ENCODE measurements at regions of chr9 and their contacts with region 1.

Region 1: GRCh38 chr9:108761655-108762347 is 94.0 kb downstream of the ACTL7B start:
- DNase-seq: peak; percentile 71
- H3K4me3 Mint-ChIP-seq: no peak overlapping the region
- H3K27ac Mint-ChIP-seq: peak overlapping the region; percentile 31
- H3K4me1 Mint-ChIP-seq: peaks cover 18% of the 10 kb centered on the region
- H3K27me3 Mint-ChIP-seq: no peaks in the 10 kb centered on the region
- CTCF ChIP-seq: peak; percentile 89

Region 2: GRCh38 chr9:107465467-107466451 is 1296.0 kb before region 1 on chr9:
- CTCF ChIA-PET with region 1: interaction called, 8 read pairs
- POLR2A ChIA-PET with region 1: no interaction called
- intact Hi-C with region 1: loop called (anchors 2 kb)
- DNase-seq: peak; percentile 61
- H3K4me3 Mint-ChIP-seq: peak overlapping the region; percentile 69
- H3K27ac Mint-ChIP-seq: no peak overlapping the region
- H3K4me1 Mint-ChIP-seq: no peaks in the 10 kb centered on the region
- H3K27me3 Mint-ChIP-seq: no peaks in the 10 kb centered on the region
- CTCF ChIP-seq: peak; percentile 95

Region 3: DNA sequence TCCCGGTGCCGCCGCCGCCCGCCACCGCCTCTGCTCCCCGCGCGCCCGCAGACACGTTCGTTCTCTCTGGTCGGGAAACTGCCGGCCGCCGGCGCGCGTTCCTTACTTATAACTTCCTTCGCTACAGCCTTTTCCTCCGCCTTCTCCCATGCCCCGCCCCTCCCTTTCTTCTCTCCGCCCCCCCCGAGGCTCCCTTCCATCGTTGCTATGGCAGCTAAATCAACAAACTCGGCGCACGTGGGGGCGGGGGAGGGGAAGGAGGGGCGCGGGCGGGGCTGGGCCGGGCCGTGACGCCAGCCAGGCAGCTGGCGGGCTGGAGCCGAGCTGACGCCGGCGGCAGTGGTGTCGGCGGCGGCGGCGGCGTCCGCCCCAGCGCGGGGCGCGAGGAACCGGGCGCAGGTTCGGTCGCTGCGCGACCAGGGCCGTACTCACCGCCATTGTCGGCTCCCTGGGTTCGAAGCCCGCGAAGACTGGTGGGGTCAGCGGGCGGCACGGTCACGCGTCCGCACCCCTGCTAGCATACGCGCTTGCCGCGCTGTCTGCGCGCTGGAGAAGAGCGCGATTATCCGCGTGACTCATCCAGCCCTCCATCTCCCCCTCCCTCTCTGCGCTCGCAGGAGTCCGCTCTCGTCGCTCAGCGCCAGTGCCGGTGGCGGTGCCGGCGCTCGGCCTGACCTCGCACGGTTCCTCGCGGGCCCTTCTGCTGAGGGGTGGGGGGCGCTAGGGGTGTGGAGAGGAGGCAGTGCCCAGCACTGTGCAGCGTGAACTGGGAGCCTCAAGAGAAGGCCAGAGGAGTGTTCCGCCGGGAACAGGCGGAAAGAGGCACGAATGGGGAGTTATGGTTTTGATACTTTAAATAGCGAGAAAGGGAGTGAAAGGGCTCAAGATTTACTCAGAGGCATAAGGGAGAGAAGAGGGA is 1271.9 kb before region 1 on chr9 and contains the start of gene KLF4:
- CTCF ChIA-PET with region 1: interaction called, 3 read pairs
- POLR2A ChIA-PET with region 1: interaction called, 4 read pairs
- intact Hi-C with region 1: loop called (anchors 5 kb)
- DNase-seq: peak; percentile 95
- H3K4me3 Mint-ChIP-seq: peak within 1 kb of the TSS; percentile 94
- H3K27ac Mint-ChIP-seq: peak within 1 kb of the TSS; percentile 96
- H3K4me1 Mint-ChIP-seq: peaks cover 18% of the 10 kb centered on the region
- H3K27me3 Mint-ChIP-seq: no peaks in the 10 kb centered on the region
- CTCF ChIP-seq: no peak
- total RNA-seq, gene KLF4: 94.9 and 96.0 TPM in 2 replicates

Region 4: DNA sequence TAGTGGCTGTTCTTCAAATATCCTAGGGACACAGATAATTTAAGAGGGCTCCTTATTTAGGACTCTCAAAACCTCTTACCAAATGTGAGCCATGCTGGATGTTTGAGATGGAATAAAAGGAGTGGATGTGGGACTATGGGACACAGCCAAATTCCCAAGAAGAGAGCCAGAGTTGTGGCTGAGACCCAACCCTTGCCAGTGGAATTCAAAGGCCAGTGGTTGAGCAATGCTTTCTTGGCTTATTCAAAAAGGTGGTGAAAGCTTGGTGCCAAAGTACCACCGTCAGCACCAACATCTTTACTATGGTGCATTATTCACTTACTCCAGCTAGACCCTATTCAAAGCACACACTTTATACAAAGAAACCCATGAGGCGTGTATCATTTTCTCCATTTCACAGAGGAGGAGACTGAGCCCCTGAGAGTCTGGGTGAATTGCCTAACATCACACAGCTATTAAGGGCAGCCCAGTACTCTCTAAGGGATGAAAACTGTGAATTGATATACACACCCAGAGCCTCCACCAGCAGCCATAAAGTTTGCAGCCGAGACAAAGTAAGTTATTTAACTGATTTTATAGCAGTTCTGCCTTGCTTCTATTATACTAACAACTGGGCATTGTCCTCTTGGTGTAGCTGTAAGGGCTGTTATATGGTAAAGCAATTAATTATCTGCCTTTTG is 297.7 kb before region 1 on chr9:
- CTCF ChIA-PET with region 1: no interaction called
- POLR2A ChIA-PET with region 1: no interaction called
- intact Hi-C with region 1: no loop called
- DNase-seq: peak; percentile 76
- H3K4me3 Mint-ChIP-seq: no peak overlapping the region
- H3K27ac Mint-ChIP-seq: peak overlapping the region; percentile 46
- H3K4me1 Mint-ChIP-seq: peaks cover 15% of the 10 kb centered on the region
- H3K27me3 Mint-ChIP-seq: no peaks in the 10 kb centered on the region
- CTCF ChIP-seq: no peak

Region 5: GRCh38 chr9:108478431-108478837 is 283.4 kb before region 1 on chr9:
- CTCF ChIA-PET with region 1: interaction called, 3 read pairs
- POLR2A ChIA-PET with region 1: no interaction called
- intact Hi-C with region 1: loop called (anchors 10 kb)
- DNase-seq: peak; percentile 97
- H3K4me3 Mint-ChIP-seq: peak overlapping the region; percentile 37
- H3K27ac Mint-ChIP-seq: peak overlapping the region; percentile 89
- H3K4me1 Mint-ChIP-seq: peaks cover 47% of the 10 kb centered on the region
- H3K27me3 Mint-ChIP-seq: no peaks in the 10 kb centered on the region
- CTCF ChIP-seq: no peak

Region 6: GRCh38 chr9:108521063-108521590 is 240.7 kb before region 1 on chr9:
- CTCF ChIA-PET with region 1: no interaction called
- POLR2A ChIA-PET with region 1: no interaction called
- intact Hi-C with region 1: no loop called
- DNase-seq: peak; percentile 55
- H3K4me3 Mint-ChIP-seq: no peak overlapping the region
- H3K27ac Mint-ChIP-seq: no peak overlapping the region
- H3K4me1 Mint-ChIP-seq: peaks cover 9% of the 10 kb centered on the region
- H3K27me3 Mint-ChIP-seq: no peaks in the 10 kb centered on the region
- CTCF ChIP-seq: no peak

Region 7: DNA sequence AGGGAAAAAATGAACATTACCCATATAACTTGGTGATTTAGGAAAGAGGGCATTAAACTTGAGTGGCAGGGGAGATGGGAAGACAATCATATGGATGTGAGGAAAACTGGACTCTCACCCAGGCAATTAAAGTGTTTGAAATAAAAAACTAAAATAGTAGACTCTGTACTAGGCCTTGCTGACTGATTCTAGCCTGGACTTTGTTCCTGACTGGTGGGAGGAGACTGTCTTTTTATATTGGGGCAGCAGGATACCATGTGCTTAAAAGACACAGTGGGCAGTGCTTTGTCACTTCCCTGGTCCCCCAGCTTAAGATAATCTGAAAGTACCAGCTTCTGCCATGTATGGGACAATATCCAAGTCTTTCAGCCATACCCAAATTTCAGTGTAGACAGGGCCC is 13.0 kb before region 1 on chr9:
- CTCF ChIA-PET with region 1: interaction called, 12 read pairs
- POLR2A ChIA-PET with region 1: no interaction called
- intact Hi-C with region 1: no loop called
- DNase-seq: no peak
- H3K4me3 Mint-ChIP-seq: no peak overlapping the region
- H3K27ac Mint-ChIP-seq: no peak overlapping the region
- H3K4me1 Mint-ChIP-seq: peaks cover 11% of the 10 kb centered on the region
- H3K27me3 Mint-ChIP-seq: no peaks in the 10 kb centered on the region
- CTCF ChIP-seq: no peak

Region 8: GRCh38 chr9:108813951-108814601 is 52.3 kb after region 1 on chr9:
- CTCF ChIA-PET with region 1: interaction called, 14 read pairs
- POLR2A ChIA-PET with region 1: no interaction called
- intact Hi-C with region 1: loop called (anchors 1 kb)
- DNase-seq: peak; percentile 81
- H3K4me3 Mint-ChIP-seq: no peak overlapping the region
- H3K27ac Mint-ChIP-seq: peak overlapping the region; percentile 56
- H3K4me1 Mint-ChIP-seq: peaks cover 9% of the 10 kb centered on the region
- H3K27me3 Mint-ChIP-seq: no peaks in the 10 kb centered on the region
- CTCF ChIP-seq: peak; percentile 92

Region 9: DNA sequence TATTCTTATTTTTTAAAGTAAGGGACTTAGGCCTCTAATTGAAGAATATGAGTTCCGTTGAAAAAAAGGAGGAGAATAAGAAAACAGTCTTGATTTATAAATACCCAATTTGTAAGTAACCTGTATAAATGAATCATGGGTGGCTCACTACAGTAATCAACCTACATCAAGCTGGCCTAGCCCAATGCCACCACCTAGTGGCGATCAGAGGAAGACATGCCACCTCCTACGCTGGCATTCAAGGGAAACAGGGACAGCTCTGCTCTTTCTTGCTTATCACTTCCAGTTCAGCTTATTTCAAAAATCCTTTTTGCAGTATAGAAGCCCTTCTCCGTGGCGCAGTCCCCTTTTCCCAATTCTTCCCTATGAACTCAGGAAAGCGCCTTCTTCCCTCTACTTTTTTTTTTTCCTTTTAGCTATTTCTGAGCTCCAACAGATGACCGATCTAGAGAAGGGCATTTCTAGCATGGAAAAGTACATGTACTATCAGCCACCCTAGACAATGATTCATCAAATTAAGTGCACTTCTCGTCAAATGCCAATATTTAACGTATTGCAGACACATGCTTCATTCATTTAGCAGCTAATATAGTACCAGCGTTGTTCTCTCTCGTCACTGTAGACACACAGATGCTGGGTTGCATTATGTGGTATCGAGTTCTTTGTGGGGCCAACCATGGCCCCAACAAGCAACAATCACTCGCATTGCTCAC is 708.0 kb after region 1 on chr9:
- CTCF ChIA-PET with region 1: no interaction called
- POLR2A ChIA-PET with region 1: no interaction called
- intact Hi-C with region 1: no loop called
- DNase-seq: peak; percentile 88
- H3K4me3 Mint-ChIP-seq: no peak overlapping the region
- H3K27ac Mint-ChIP-seq: peak overlapping the region; percentile 67
- H3K4me1 Mint-ChIP-seq: peaks cover 49% of the 10 kb centered on the region
- H3K27me3 Mint-ChIP-seq: no peaks in the 10 kb centered on the region
- CTCF ChIP-seq: peak; percentile 91

Measured in MCF 10A (cell line).